Endothelial cell of umbilical vein (primary cell): ENCODE measurements at regions of chr6 and their contacts with region 1.

Region 1: DNA sequence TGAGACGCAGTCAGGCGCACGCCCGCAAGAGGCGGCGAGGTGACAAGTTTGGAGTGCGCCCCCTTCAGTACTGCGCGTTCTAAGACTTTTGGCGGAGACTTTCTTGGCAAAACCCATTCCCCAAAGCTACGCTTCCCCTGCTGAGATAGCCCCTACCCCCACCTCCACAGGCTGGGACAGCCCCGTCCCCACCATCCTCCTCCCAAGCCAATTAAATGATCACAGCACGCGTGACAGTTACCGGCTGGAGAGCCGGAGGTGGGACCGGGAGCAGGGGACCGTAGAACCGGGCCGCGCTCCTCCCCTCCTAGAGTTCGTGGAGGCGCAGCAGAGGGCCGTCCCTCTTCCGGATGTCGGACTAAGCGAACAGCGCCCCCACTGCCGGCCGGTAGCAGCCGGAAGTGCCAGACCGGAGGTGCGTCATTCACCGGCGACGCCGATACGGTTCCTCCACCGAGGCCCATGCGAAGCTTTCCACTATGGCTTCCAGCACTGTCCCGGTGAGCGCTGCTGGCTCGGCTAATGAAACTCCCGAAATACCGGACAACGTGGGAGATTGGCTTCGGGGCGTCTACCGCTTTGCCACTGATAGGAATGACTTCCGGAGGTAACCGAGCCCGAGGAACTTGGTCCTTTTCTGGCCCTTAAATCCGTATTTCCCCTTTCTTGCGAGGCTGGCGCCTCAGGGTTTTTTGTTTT is at the start of gene TOMM6:
- DNase-seq: peak; percentile 97
- H3K4me3 ChIP-seq: peak within 1 kb of the TSS; percentile 78 to 97 (median 94)
- H3K27ac ChIP-seq: peak within 1 kb of the TSS; percentile 80
- H3K4me1 ChIP-seq: peaks cover 10% of the 10 kb centered on the region
- H3K27me3 ChIP-seq: no peaks in the 10 kb centered on the region
- CTCF ChIP-seq: peak; percentile 83 to 84
- POLR2A ChIP-seq: peak; percentile 95
- total RNA-seq, gene TOMM6: 220 and 233 TPM in 2 replicates

Region 2: GRCh38 chr6:41367700-41368099 is 419.7 kb before region 1 on chr6:
- CTCF ChIA-PET with region 1: interaction called, 20 read pairs
- POLR2A ChIA-PET with region 1: no interaction called
- dilution Hi-C with region 1: no loop called
- intact Hi-C with region 1: no loop called
- DNase-seq: peak; percentile 62
- H3K4me3 ChIP-seq: no peak overlapping the region
- H3K27ac ChIP-seq: no peak overlapping the region
- H3K4me1 ChIP-seq: peaks cover 3% of the 10 kb centered on the region
- H3K27me3 ChIP-seq: peaks cover 27 to 46% of the 10 kb centered on the region in 2 experiments
- CTCF ChIP-seq: peak; percentile 50 to 81
- POLR2A ChIP-seq: no peak

Region 3: GRCh38 chr6:41801380-41801779 is 14.0 kb after region 1 on chr6:
- CTCF ChIA-PET with region 1: interaction called, 20 read pairs
- POLR2A ChIA-PET with region 1: interaction called, 3 read pairs
- dilution Hi-C with region 1: no loop called
- intact Hi-C with region 1: no loop called
- DNase-seq: peak; percentile 67
- H3K4me3 ChIP-seq: no peak overlapping the region
- H3K27ac ChIP-seq: no peak overlapping the region
- H3K4me1 ChIP-seq: no peaks in the 10 kb centered on the region
- H3K27me3 ChIP-seq: no peaks in the 10 kb centered on the region
- CTCF ChIP-seq: peak; percentile 65 to 68
- POLR2A ChIP-seq: no peak

Region 4: DNA sequence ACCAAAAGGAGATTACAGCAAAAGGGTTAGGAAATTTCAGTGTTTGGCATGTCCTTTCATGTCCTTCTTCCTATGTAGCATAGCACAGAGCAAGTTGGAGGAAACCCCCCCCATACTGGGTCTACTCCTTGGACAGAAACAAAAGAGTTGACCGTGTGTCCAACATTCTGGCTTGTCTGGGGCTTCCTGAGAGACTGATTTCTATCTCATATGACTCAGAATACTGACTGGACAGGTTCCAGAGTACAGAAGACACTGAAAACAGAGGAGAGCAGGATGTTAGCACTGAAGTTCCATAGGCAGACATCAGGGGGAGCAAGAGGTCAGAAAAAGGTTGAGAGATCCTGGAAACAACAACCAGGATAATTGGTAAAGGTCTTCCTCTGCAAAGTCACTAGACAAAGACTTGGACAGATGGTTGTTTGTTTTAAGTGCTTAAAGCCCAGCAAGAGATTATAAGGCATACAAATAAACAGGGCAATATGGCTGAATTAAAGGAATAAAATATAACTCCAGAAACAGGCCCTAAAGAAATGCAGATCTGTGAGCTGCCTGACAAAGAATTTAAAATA is 59.4 kb after region 1 on chr6:
- CTCF ChIA-PET with region 1: interaction called, 4 read pairs
- POLR2A ChIA-PET with region 1: no interaction called
- dilution Hi-C with region 1: no loop called
- intact Hi-C with region 1: loop called (anchors 1 kb)
- DNase-seq: peak; percentile 99
- H3K4me3 ChIP-seq: peak overlapping the region in 1 of 3 experiments; percentile 16
- H3K27ac ChIP-seq: peak overlapping the region; percentile 96
- H3K4me1 ChIP-seq: peaks cover 17% of the 10 kb centered on the region
- H3K27me3 ChIP-seq: no peaks in the 10 kb centered on the region
- CTCF ChIP-seq: peak; percentile 79 to 85
- POLR2A ChIP-seq: peak; percentile 46

Region 5: DNA sequence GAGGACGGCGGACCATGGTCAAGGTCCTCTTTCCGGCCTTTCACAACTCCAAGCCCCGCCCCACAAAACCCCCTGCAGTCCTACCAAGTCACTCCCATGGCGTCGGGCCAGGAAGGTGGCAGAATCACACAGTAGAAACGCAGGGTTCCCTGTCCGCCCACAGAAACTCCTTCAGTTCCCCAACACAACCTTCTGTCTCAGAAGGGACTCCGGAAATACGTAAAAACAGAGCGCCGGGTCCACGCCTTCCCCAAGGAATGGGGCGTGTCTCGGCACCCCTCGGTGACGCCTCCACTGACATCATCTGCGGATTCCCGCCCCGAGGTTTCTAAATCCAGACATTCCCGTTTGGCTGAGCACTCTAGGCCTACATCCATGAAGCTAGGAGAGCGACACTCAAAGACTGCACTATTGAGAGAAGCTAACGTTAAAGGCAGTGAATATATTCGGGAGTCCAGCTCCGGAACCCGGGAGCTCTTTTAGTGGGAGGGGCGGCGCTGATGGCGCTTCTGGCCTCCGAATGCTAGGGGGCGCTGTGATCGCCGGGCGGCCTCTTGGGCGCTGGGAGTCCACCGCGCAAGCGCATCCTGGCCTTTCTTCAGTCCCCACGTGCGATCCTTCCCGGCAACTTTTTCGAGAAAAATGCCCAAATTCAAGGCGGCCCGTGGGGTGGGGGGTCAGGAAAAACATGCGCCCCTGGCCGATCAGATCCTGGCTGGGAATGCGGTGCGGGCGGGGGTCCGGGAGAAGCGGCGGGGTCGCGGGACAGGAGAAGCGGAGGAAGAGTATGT is 133.7 kb after region 1 on chr6 and contains the starts of genes BYSL and MED20:
- CTCF ChIA-PET with region 1: interaction called, 59 read pairs
- POLR2A ChIA-PET with region 1: interaction called, 7 read pairs
- dilution Hi-C with region 1: no loop called
- intact Hi-C with region 1: loop called (anchors 1 kb)
- DNase-seq: peak; percentile 93
- H3K4me3 ChIP-seq: peak within 1 kb of the TSS; percentile 54 to 83 (median 82)
- H3K27ac ChIP-seq: peak within 1 kb of the TSS; percentile 94
- H3K4me1 ChIP-seq: peaks cover 38% of the 10 kb centered on the region
- H3K27me3 ChIP-seq: no peaks in the 10 kb centered on the region
- CTCF ChIP-seq: peak; percentile 98
- POLR2A ChIP-seq: peak; percentile 72
- total RNA-seq, gene BYSL: 41.8 and 45.7 TPM in 2 replicates
- total RNA-seq, gene MED20: 25.5 and 30.4 TPM in 2 replicates

Region 6: DNA sequence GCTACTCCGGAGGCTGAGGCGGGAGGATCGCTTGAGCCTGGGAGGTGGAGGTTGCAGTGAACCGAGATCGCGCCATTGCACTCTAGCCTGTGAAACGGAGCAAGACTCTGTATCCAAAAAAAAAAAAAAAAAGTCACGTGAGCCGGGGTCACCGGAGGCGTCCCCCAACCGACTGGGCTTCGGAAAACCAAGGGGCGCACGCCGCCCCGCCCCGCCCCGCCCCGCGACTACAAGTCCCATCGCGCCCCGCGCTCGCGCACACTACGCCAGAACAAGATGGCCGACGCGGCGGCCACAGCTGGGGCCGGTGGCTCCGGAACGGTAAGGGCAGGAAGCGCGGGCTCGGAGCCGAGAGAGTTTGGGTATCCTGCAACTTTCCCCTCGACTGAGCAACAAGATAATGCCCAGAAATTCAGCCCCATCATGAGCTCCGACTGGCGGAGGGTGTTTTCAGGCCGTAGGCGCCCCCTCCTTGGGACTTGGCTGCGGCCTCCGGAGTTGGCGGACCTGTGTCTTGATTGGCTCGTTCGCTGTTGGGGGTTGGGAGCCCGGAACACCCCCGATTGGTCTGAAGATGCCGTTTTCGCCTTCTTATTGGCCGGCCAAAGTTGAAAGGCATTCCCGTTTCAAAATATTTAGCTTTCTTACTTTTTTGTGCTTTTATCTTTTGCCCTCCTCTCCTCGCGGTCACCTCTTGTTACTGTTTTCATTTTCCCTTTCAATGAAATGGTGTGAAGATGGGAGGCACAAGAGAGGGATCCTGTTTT is 263.1 kb after region 1 on chr6 and contains the start of gene TAF8:
- CTCF ChIA-PET with region 1: interaction called, 78 read pairs
- POLR2A ChIA-PET with region 1: no interaction called
- dilution Hi-C with region 1: no loop called
- intact Hi-C with region 1: no loop called
- DNase-seq: peak; percentile 92
- H3K4me3 ChIP-seq: peak within 1 kb of the TSS; percentile 83 to 92 (median 87)
- H3K27ac ChIP-seq: peak within 1 kb of the TSS; percentile 77
- H3K4me1 ChIP-seq: peaks cover 32% of the 10 kb centered on the region
- H3K27me3 ChIP-seq: no peaks in the 10 kb centered on the region
- CTCF ChIP-seq: no peak
- POLR2A ChIP-seq: peak; percentile 99
- total RNA-seq, gene TAF8: 32.4 and 32.9 TPM in 2 replicates